Endothelial cell of umbilical vein (primary cell): ENCODE measurements at regions of chr22 and their contacts with region 1.

Region 1: DNA sequence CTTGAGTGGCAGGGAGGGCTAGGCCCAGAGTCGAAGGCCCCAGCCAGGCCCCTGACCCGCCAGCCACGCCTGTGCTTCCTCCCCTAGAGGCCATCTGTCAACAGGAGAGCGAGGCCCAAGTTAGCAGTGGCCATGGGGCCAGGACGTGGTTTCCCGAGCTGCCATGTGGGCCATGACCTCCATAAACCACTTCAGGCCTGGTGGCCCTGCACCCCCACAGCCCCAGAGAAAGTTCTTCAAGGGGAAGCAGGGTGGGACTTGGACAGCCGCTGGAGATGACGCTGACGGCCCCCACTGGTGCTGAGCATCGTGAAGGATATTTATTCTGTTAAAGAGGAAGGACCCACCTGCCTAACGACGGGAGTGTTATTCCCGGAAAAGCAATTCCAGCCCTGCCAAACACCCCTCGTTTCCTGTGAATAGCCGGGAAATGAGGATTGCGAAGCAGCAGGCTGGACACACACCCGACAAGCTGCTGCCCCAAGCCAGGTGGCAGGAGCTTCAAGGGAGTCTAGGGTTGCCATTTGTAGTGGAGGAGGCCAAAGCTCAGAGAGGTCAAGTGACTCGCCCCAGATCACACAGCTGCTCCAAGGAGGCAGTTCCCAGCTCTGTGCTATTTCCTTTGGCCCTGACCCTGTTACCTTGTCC is 12.8 kb downstream of the PRR5 start:
- DNase-seq: peak; percentile 48
- H3K4me3 ChIP-seq: no peak overlapping the region
- H3K27ac ChIP-seq: no peak overlapping the region
- H3K4me1 ChIP-seq: peaks cover 9% of the 10 kb centered on the region
- H3K27me3 ChIP-seq: no peaks in the 10 kb centered on the region
- CTCF ChIP-seq: no peak
- POLR2A ChIP-seq: no peak

Region 2: DNA sequence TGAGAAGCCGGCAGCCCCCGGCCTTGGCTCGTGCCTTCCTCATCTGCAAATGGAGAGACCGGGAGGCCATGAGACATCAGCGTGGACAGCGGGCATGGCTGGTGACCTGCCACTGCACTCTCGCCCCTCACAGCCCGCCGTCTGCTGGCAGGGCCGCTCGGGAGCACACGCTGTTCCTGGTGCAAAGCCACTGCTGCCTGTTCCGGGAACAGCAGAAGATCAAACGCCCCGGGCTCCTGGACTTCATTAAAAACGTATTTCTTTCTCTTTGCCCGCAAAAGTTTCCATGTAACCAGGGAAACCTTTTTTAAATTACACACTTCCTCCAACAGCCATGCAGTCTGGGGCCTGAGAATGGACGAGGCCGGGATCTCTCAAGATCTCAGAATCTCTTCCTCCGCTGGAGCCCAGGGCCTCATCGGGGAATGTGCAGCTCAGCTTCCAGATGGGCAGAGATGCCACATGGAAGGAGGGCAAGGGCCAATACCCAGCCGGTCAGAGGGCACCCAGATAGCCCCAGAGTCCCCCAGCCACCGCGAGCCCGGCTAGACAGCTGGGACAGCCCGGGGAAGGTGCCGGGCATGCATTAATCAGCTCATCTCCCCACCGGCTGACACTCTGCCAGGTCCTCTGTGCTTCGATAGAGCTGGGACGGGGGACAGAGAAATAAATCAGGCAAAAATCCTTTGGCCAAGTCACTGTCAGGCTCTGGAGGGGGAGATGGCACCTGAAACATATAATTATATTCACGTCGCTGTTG is 75.6 kb before region 1 on chr22:
- CTCF ChIA-PET with region 1: no interaction called
- POLR2A ChIA-PET with region 1: no interaction called
- dilution Hi-C with region 1: no loop called
- intact Hi-C with region 1: no loop called
- DNase-seq: peak; percentile 36
- H3K4me3 ChIP-seq: no peak overlapping the region
- H3K27ac ChIP-seq: no peak overlapping the region
- H3K4me1 ChIP-seq: peaks cover 8% of the 10 kb centered on the region
- H3K27me3 ChIP-seq: no peaks in the 10 kb centered on the region
- CTCF ChIP-seq: no peak
- POLR2A ChIP-seq: no peak

Region 3: GRCh38 chr22:44729391-44730021 is 14.7 kb after region 1 on chr22:
- CTCF ChIA-PET with region 1: interaction called, 3 read pairs
- POLR2A ChIA-PET with region 1: no interaction called
- dilution Hi-C with region 1: no loop called
- intact Hi-C with region 1: loop called (anchors 2 kb)
- DNase-seq: peak; percentile 38
- H3K4me3 ChIP-seq: no peak overlapping the region
- H3K27ac ChIP-seq: no peak overlapping the region
- H3K4me1 ChIP-seq: no peaks in the 10 kb centered on the region
- H3K27me3 ChIP-seq: no peaks in the 10 kb centered on the region
- CTCF ChIP-seq: peak in 1 of 2 donors; percentile 36
- POLR2A ChIP-seq: no peak